Gastrocnemius medialis (tissue), 4 donors: ENCODE measurements at regions of chr10 and their contacts with region 1.

Region 1: GRCh38 chr10:24360282-24361127 is 151.6 kb downstream of the KIAA1217 start:
- DNase-seq: peak; percentile 57 to 78
- ATAC-seq: peak; percentile 82 to 89
- H3K4me3 ChIP-seq: no peak overlapping the region
- H3K27ac ChIP-seq: peak overlapping the region; percentile 44 to 73 (median 62)
- H3K4me1 ChIP-seq: peaks cover 14 to 22% of the 10 kb centered on the region in 2 donors
- H3K27me3 ChIP-seq: no peaks in the 10 kb centered on the region
- CTCF ChIP-seq: peak; percentile 57 to 75 (median 72)
- POLR2A ChIP-seq: no peak

Region 2: DNA sequence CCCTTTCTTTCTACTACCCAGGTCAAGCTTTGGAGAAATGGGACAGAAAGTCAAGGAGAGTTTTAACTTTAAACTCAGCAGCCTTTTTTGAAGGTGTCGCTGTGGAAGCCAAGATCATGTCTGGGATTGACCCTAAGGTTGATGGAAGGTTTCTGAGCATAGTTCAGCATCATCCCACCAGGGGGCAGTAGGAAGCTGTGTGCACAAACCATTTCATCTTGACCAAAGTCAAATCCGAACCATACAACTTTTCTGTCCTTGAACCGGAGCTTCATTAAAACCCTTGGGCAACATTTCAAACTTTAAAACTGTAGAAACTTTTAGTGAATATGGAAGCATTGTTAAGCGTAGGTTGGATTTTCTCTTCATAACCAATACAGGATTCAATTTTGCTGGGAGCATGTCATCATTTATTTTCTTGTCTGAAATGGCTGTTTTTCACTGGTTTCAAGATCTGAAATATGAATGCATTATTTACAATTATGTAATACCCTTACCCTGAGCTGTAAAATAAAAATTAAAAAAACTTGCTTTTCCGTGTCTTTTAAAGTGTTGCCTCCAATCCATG is 365.9 kb before region 1 on chr10:
- in situ Hi-C with region 1: loop called in 3 of 4 experiments (anchors 10 kb)
- intact Hi-C with region 1: loop called (anchors 2 kb)
- DNase-seq: peak; percentile 26 to 62
- ATAC-seq: peak; percentile 89
- H3K4me3 ChIP-seq: no peak overlapping the region
- H3K27ac ChIP-seq: no peak overlapping the region
- H3K4me1 ChIP-seq: peaks cover 6 to 11% of the 10 kb centered on the region in 2 donors
- H3K27me3 ChIP-seq: no peaks in the 10 kb centered on the region
- CTCF ChIP-seq: peak; percentile 93 to 96 (median 94)
- POLR2A ChIP-seq: no peak

Region 3: GRCh38 chr10:24209946-24210491 is 150.5 kb before region 1 on chr10:
- in situ Hi-C with region 1: loop called in 3 of 4 experiments (anchors 5 to 25 kb)
- intact Hi-C with region 1: loop called (anchors 5 kb)
- DNase-seq: peak in 1 of 2 donors; percentile 37
- ATAC-seq: peak in 1 of 2 donors; percentile 10
- H3K4me3 ChIP-seq: peak overlapping the region; percentile 62 to 86 (median 69)
- H3K27ac ChIP-seq: peak overlapping the region; percentile 92 to 96 (median 94)
- H3K4me1 ChIP-seq: peaks cover 73% of the 10 kb centered on the region in 2 donors
- H3K27me3 ChIP-seq: no peaks in the 10 kb centered on the region
- CTCF ChIP-seq: no peak
- POLR2A ChIP-seq: no peak

Region 4: DNA sequence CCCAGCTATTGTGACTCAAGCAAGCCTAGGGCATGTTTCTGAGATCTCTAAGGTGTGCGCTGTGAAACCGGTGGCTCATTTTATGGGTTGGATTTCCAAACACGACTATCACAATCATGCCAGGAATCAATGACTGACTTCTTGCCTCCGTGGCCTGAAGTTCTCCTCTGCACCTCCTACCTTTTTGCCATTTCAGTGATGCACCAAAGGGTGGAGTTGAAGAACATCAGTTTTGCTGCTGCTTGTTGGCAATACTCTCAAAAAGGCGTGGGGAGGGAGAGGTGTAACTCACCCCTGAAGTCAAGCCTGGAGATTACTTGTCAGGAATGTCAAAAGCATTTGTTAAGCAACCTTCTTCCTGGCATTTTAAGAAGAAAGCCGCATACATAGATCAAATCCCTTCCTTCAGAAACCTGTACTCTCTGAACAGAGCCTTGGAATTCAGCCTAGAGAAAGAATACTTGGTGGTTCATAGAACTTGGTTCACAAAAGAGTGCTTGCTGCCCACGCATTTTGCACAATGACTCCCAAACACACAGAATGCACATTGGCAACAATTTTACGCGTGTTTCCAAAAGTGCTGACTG is 110.6 kb before region 1 on chr10:
- in situ Hi-C with region 1: loop called in 1 of 4 experiments (anchors 25 kb)
- intact Hi-C with region 1: loop called (anchors 2 kb)
- DNase-seq: peak in 1 of 2 donors; percentile 54
- ATAC-seq: peak in 1 of 2 donors; percentile 48
- H3K4me3 ChIP-seq: no peak overlapping the region
- H3K27ac ChIP-seq: peak overlapping the region; percentile 94 to 98 (median 96)
- H3K4me1 ChIP-seq: peaks cover 81 to 85% of the 10 kb centered on the region in 2 donors
- H3K27me3 ChIP-seq: no peaks in the 10 kb centered on the region
- CTCF ChIP-seq: no peak
- POLR2A ChIP-seq: no peak

Region 5: DNA sequence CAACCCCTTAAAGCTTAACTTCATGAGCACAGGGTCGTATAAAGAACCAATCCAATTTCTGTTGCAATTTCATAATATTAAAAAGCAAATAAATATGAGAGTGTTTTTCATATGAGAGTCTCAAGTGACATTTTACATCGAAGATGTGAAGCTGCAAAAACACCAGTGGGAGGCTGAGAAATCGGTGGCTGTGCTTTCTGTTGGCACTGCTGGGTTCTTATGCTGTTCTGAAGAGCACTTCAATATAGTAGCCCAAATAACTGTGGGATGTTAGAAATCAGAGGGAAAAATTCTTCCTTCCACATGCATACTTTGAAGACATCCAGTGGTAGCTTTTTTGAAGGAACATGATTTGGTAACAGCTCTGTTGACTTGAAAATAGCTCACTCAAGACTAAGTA is 117.4 kb after region 1 on chr10:
- in situ Hi-C with region 1: no loop called
- intact Hi-C with region 1: no loop called
- DNase-seq: no peak
- ATAC-seq: no peak
- H3K4me3 ChIP-seq: no peak overlapping the region
- H3K27ac ChIP-seq: peak overlapping the region in 1 of 4 donors; percentile 5
- H3K4me1 ChIP-seq: peaks cover 6 to 32% of the 10 kb centered on the region in 2 donors
- H3K27me3 ChIP-seq: no peaks in the 10 kb centered on the region
- CTCF ChIP-seq: no peak
- POLR2A ChIP-seq: no peak

Region 6: DNA sequence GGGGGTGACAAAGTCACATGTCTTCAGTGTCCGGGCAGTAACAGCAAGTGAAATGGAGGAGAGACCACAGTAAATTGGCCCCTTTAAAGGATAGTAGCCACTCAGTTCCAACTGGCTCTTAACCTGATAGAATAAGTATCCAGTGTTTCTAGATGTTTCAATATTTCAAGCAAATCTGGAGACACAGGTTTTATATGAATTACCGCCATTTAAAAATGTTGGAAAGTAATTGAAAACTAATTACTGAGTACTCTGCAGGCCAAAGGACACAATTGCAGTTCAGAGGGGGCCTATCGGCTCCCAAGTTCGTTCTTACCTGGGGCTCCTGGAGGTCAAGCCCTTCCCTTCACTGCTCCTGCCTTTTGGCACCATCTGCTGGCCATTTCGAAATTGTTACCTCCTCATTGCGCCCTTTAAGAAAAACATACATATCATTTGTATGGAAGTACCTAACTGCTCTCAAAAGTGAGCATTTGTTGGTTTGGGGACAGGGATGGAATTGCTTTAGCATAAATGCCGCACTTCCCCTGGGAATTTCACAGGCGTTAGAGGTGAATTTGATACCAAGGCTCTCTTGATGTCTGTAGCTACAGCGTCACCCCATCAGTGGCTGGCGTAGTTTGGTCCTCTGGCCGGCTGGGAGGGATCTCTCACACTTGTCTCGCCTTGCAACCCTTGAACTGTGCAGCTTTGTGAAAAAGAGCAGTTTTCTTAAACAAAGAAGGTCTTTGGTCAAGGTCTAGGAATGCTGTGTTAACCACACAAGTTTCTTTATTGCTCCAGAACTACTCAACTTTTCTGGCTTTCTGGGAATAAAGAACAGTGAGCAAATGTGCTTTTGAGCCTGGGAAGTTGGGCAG is 143.2 kb after region 1 on chr10:
- in situ Hi-C with region 1: loop called in 1 of 4 experiments (anchors 25 kb)
- intact Hi-C with region 1: no loop called
- DNase-seq: no peak
- ATAC-seq: peak; percentile 33 to 60
- H3K4me3 ChIP-seq: no peak overlapping the region
- H3K27ac ChIP-seq: peak overlapping the region; percentile 5 to 45 (median 17)
- H3K4me1 ChIP-seq: peaks cover 3 to 6% of the 10 kb centered on the region in 2 donors
- H3K27me3 ChIP-seq: no peaks in the 10 kb centered on the region
- CTCF ChIP-seq: peak; percentile 17 to 57 (median 53)
- POLR2A ChIP-seq: no peak